GM12878 (cell line): ENCODE measurements at regions of chr1 and their contacts with region 1.

Region 1: GRCh38 chr1:175887981-175888433 is 144.6 kb upstream of the TNR start:
- DNase-seq: no peak
- ATAC-seq: peak; percentile 99
- H3K4me3 ChIP-seq: no peak overlapping the region
- H3K27ac ChIP-seq: no peak overlapping the region
- H3K4me1 ChIP-seq: no peaks in the 10 kb centered on the region
- H3K27me3 ChIP-seq: no peaks in the 10 kb centered on the region
- CTCF ChIP-seq: peak; percentile 71 to 82 (median 79)
- EP300 ChIP-seq: no peak
- POLR2A ChIP-seq: no peak
- RAD21 ChIP-seq: peak; percentile 67

Region 2: DNA sequence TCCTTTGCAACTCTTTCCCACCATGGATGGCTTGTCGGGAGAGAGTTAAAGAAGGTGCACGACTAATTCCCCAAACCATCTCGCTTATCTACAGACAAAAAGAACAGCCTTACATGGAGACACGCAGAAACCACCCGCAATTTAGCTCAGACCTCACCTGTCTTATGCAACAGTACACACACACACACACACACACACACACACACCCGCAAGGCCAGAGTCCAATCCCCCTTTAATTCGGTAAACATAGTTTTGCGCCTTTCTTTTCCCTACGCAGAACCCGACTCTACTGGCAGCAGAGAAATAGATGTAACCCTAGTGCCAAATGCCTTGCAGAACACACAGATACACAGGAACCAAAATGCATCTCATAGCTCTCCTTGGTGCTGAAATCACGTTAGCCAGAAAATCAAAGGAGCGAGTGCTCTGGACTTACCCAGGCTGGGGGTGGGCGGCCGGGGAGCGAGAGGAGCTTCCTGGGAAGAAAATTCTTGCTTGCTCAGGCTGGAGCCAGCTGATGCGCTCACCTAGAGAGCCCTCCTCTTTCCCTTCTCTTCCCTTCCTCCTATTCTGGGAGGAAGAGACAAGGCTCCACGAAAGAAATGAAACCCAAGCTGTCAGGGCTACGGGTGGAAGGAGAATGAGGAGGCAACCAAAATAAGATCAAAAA is 145.1 kb before region 1 on chr1:
- CTCF ChIA-PET with region 1: interaction called, 3 read pairs
- POLR2A ChIA-PET with region 1: no interaction called
- RAD21 ChIA-PET with region 1: no interaction called
- SMC1A ChIA-PET with region 1: interaction called, 3 read pairs
- in situ Hi-C with region 1: no loop called
- intact Hi-C with region 1: loop called (anchors 5 kb)
- DNase-seq: no peak
- ATAC-seq: peak; percentile 66
- H3K4me3 ChIP-seq: no peak overlapping the region
- H3K27ac ChIP-seq: no peak overlapping the region
- H3K4me1 ChIP-seq: no peaks in the 10 kb centered on the region
- H3K27me3 ChIP-seq: 0 out of 4 replicates have a peak, but pooled peaks cover 0 to 4% of the 10 kb centered on the region in 2 experiments
- CTCF ChIP-seq: no peak
- EP300 ChIP-seq: no peak
- POLR2A ChIP-seq: no peak
- RAD21 ChIP-seq: no peak

Region 3: GRCh38 chr1:175757381-175758015 is 130.5 kb before region 1 on chr1:
- CTCF ChIA-PET with region 1: no interaction called
- POLR2A ChIA-PET with region 1: interaction called, 3 read pairs
- RAD21 ChIA-PET with region 1: no interaction called
- SMC1A ChIA-PET with region 1: no interaction called
- in situ Hi-C with region 1: no loop called
- intact Hi-C with region 1: loop called (anchors 5 kb)
- DNase-seq: no peak
- ATAC-seq: peak; percentile 98
- H3K4me3 ChIP-seq: no peak overlapping the region
- H3K27ac ChIP-seq: no peak overlapping the region
- H3K4me1 ChIP-seq: no peaks in the 10 kb centered on the region
- H3K27me3 ChIP-seq: no peaks in the 10 kb centered on the region; a peak in 1 of 4 replicates
- CTCF ChIP-seq: peak; percentile 75 to 94 (median 94)
- EP300 ChIP-seq: no peak
- POLR2A ChIP-seq: no peak
- RAD21 ChIP-seq: peak; percentile 59